Activated CD4-positive, alpha-beta T cell treated with anti-CD3 and anti-CD28 coated beads for 36 hours (primary cell): ENCODE measurements at regions of chr6 and their contacts with region 1.

Region 1: GRCh38 chr6:27753668-27754407 is 158.4 kb downstream of the OR2B2 start:
- DNase-seq: peak; percentile 89
- ATAC-seq: peak; percentile 70
- H3K4me3 Mint-ChIP-seq: peak overlapping the region; percentile 98
- H3K27ac Mint-ChIP-seq: peak overlapping the region; percentile 81
- H3K4me1 Mint-ChIP-seq: peaks cover 31% of the 10 kb centered on the region
- H3K27me3 Mint-ChIP-seq: peaks cover 3% of the 10 kb centered on the region

Region 2: GRCh38 chr6:27177485-27178406 is 576.1 kb before region 1 on chr6:
- CTCF ChIA-PET with region 1: interaction called, 5 read pairs
- POLR2A ChIA-PET with region 1: no interaction called
- intact Hi-C with region 1: loop called in 1 of 2 experiments (anchors 1 kb)
- DNase-seq: peak; percentile 86
- ATAC-seq: peak; percentile 89
- H3K4me3 Mint-ChIP-seq: peak overlapping the region; percentile 88
- H3K27ac Mint-ChIP-seq: peak overlapping the region; percentile 87
- H3K4me1 Mint-ChIP-seq: peaks cover 2% of the 10 kb centered on the region
- H3K27me3 Mint-ChIP-seq: no peaks in the 10 kb centered on the region

Region 3: DNA sequence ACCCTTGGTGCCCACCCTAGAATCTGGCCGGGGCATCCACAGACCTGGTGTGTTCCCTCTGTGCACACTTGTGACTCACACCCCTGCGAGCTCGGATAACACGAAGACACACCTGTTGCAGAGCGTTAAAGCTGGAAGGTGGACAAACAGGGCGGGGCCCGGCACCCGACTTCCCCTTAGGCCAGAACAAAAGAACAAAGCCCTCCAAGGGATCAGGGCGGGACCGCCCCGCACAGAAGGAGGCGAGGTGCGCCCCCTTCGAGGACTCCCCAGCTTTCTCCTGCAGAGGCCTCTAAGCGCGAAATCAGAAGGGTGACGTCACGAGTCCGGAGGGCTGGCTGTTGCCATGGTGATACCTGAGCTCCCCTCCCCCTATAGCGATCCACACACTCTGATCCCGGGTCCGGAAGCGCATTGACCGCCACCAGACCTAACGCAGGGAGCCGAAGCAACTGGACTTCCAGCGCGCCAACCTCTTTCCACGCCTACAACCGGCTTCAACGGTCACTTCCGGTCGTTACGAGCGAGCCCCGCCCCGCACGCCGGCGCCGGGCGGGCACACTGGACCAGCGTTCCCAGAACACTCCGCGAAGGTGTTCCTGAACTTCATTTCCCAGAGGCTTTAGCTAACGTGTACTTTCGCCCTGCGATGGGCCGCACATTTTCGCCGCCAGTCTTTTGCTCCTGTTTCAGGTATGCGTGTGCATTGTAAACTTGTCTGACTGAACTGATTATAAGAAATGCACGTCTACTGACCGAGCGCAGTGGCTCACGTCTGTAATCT is 281.0 kb before region 1 on chr6 and contains the start of gene ZNF184:
- CTCF ChIA-PET with region 1: no interaction called
- POLR2A ChIA-PET with region 1: no interaction called
- intact Hi-C with region 1: loop called (anchors 1 to 2 kb)
- DNase-seq: peak; percentile 91
- ATAC-seq: peak; percentile 83
- H3K4me3 Mint-ChIP-seq: peak within 1 kb of the TSS; percentile 84
- H3K27ac Mint-ChIP-seq: peak within 1 kb of the TSS; percentile 97
- H3K4me1 Mint-ChIP-seq: peaks cover 44% of the 10 kb centered on the region
- H3K27me3 Mint-ChIP-seq: no peaks in the 10 kb centered on the region
- total RNA-seq, gene ZNF184: 11.8 to 14.5 TPM

Region 4: DNA sequence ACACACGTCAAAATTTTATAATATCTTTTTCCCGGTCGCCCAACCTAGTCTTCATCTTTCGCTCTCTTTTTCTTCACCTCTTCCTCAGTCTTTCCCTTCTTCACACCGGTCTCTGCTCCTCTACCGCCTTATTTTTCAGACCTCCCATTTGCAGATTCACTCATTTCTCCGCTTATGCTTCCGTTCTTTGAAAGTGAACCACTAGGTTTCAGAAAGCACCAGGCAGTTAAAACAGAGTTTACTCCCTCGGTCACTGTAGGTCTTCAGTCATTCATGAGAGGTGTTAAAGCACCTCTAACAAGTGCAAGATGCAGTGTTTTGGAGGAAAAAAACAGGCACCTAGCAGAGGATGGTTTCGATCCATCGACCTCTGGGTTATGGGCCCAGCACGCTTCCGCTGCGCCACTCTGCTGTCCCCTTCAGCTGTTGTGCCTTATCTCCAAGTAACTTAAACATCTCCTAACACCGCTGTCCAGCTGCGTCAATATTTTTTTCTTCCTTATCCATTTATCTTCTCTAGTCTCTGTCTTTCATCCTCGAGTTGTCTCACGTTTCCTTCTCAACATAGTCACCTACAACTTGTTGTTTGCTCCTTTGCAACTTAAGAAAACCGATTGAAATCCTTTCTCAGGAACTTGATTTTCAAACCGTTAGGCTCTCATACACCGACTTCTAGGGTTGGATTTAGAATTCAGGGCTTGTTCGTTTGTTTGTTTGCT is 161.2 kb before region 1 on chr6:
- CTCF ChIA-PET with region 1: no interaction called
- POLR2A ChIA-PET with region 1: no interaction called
- intact Hi-C with region 1: loop called in 1 of 2 experiments (anchors 5 kb)
- DNase-seq: peak; percentile 72
- ATAC-seq: peak; percentile 94
- H3K4me3 Mint-ChIP-seq: no peak overlapping the region
- H3K27ac Mint-ChIP-seq: no peak overlapping the region
- H3K4me1 Mint-ChIP-seq: no peaks in the 10 kb centered on the region
- H3K27me3 Mint-ChIP-seq: peaks cover 35% of the 10 kb centered on the region

Region 5: DNA sequence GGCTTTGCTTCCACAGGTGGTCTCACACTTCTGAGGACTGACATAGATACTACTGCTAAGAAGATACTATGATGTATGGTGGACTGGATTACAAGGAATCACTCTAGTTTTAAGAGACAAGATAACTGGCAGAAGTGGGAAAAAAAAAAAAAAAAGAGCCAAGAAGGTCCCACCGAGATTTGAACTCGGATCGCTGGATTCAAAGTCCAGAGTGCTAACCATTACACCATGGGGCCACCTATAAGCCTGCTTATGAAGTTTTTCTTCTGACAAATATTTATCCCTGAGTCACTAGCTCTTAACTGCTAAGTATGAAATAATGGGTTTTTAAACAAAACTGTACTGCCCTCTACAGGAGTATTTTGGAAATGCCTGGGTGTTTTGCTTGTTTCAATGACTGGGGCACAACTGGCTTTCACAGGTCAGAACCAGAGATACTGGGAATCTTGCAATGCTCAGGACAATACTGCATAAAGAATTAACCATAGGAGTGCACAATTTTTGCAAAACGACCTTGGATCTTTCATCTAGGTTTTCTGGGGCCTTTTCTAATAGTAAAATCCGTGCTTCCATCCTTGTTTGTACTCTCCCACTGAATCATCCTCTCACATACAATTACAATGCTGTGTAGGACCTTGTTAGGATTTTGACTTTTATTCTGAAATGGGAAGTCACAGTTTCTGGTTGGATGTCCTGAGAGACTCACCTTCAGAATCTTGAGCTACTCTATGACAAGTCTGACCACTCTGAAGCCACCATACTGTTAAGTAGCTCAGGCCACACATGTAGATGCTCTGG is 42.1 kb after region 1 on chr6:
- CTCF ChIA-PET with region 1: interaction called, 6 read pairs
- POLR2A ChIA-PET with region 1: no interaction called
- intact Hi-C with region 1: loop called in 1 of 2 experiments (anchors 1 kb)
- DNase-seq: peak; percentile 59
- ATAC-seq: peak; percentile 55
- H3K4me3 Mint-ChIP-seq: no peak overlapping the region
- H3K27ac Mint-ChIP-seq: peak overlapping the region; percentile 13
- H3K4me1 Mint-ChIP-seq: peaks cover 26% of the 10 kb centered on the region
- H3K27me3 Mint-ChIP-seq: peaks cover 6% of the 10 kb centered on the region